ENCODE measurements at regions of chr11 and their contacts with region 1.

Region 1: GRCh38 chr11:72413914-72414628 is 20.3 kb downstream of the CLPB start:
- DNase-seq: no peak
- ATAC-seq: peak; percentile 83
- H3K4me3 ChIP-seq: no peak overlapping the region
- H3K27ac ChIP-seq: peak overlapping the region; percentile 53
- H3K4me1 ChIP-seq: peaks cover 23% of the 10 kb centered on the region
- H3K27me3 ChIP-seq: no peaks in the 10 kb centered on the region
- CTCF ChIP-seq: peak; percentile 92 to 98 (median 96); a peak in 5 of 6 replicates
- EP300 ChIP-seq: no peak
- POLR2A ChIP-seq: no peak
- RAD21 ChIP-seq: peak; percentile 81

Region 2: GRCh38 chr11:72189461-72190275 is 224.4 kb before region 1 on chr11:
- CTCF ChIA-PET with region 1: interaction called, 12 read pairs
- POLR2A ChIA-PET with region 1: no interaction called
- RAD21 ChIA-PET with region 1: no interaction called
- SMC1A ChIA-PET with region 1: interaction called, 3 read pairs
- in situ Hi-C with region 1: no loop called
- intact Hi-C with region 1: no loop called
- DNase-seq: no peak
- ATAC-seq: no peak
- H3K4me3 ChIP-seq: no peak overlapping the region
- H3K27ac ChIP-seq: no peak overlapping the region
- H3K4me1 ChIP-seq: no peaks in the 10 kb centered on the region
- H3K27me3 ChIP-seq: no peaks in the 10 kb centered on the region
- CTCF ChIP-seq: no peak
- EP300 ChIP-seq: no peak
- POLR2A ChIP-seq: no peak
- RAD21 ChIP-seq: no peak

Region 3: DNA sequence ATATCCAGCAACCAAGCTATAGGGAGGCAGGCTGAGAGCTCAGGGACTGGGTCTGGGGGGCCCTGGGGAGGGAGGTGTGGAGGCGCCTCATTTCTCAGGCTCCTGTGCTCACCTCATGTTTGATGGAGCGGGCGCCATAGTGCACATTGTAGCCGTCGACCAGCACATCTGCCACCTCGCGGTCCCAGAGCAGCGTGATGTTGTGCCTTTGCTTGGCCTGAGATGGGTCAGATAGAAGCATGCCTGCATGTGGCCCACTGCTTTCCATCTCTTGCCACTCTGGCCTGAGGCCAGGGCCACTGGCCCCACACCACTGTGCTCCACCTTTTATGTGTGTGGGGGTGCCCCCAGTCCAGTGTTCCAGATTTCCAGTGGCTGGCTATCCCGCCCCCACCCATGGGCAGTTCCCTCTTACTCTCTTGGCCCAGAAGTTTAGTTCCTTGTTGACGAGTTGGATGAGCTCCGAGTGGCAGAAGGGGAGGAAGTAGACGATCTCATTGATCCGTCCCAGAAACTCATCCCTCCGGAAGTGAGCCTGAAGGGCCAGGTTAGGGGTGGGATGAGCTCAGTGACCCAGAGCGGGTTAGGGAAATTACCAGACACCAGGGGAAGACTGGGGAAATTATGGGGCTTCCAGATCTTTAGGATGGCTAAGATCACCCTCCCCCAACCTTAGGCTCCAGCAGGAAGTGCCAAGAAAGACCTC is 120.0 kb before region 1 on chr11:
- CTCF ChIA-PET with region 1: interaction called, 41 read pairs
- POLR2A ChIA-PET with region 1: no interaction called
- RAD21 ChIA-PET with region 1: interaction called, 17 read pairs
- SMC1A ChIA-PET with region 1: interaction called, 22 read pairs
- in situ Hi-C with region 1: loop called (anchors 10 kb)
- intact Hi-C with region 1: loop called (anchors 1 kb)
- DNase-seq: no peak
- ATAC-seq: no peak
- H3K4me3 ChIP-seq: no peak overlapping the region
- H3K27ac ChIP-seq: no peak overlapping the region
- H3K4me1 ChIP-seq: no peaks in the 10 kb centered on the region
- H3K27me3 ChIP-seq: no peaks in the 10 kb centered on the region
- CTCF ChIP-seq: no peak
- EP300 ChIP-seq: no peak
- POLR2A ChIP-seq: no peak
- RAD21 ChIP-seq: no peak

Region 4: GRCh38 chr11:72333661-72334060 is 80.4 kb before region 1 on chr11:
- CTCF ChIA-PET with region 1: interaction called, 20 read pairs
- POLR2A ChIA-PET with region 1: no interaction called
- RAD21 ChIA-PET with region 1: no interaction called
- SMC1A ChIA-PET with region 1: interaction called, 4 read pairs
- in situ Hi-C with region 1: no loop called
- intact Hi-C with region 1: loop called (anchors 1 kb)
- DNase-seq: no peak
- ATAC-seq: peak; percentile 34
- H3K4me3 ChIP-seq: no peak overlapping the region
- H3K27ac ChIP-seq: no peak overlapping the region
- H3K4me1 ChIP-seq: no peaks in the 10 kb centered on the region
- H3K27me3 ChIP-seq: no peaks in the 10 kb centered on the region
- CTCF ChIP-seq: no peak
- EP300 ChIP-seq: no peak
- POLR2A ChIP-seq: no peak
- RAD21 ChIP-seq: no peak

Region 5: DNA sequence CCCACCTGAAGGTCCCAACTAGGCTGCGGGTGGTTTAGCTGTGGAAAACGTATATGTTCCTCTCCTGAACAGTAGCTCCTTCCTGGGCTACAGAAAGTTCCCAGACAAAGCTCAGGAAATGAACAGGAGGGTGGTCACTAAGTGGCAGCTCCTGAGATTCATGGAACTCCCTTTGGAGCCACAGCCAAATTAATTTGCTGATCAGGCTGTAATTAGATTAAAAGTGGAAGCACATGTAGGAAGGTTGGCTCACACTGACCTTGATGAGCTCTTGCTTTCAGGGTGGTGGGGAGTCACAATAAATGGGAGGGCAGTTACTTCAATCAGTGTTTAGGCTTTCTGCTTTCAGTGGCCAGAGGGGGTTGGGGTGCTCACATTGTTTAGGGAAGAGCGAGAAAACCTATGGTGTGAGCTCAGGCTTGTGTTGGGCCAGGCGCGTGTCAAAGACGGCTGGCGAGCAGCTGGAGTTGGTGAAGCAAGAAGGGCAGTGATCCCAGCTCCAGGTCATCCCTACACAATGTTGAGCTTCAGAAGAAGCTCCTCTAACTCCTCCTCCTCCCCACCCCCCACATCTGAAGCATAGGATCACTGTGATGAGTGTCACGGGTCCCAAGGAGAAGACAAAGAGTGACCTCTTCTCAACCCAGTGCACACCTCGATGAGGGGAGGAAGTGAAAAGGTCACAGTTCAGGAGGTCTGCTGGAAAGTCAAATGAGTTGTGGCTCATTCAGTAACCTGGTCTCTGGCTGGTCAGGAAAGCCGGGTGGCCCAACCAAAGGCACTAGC is 22.2 kb before region 1 on chr11:
- CTCF ChIA-PET with region 1: interaction called, 16 read pairs
- POLR2A ChIA-PET with region 1: no interaction called
- RAD21 ChIA-PET with region 1: interaction called, 5 read pairs
- SMC1A ChIA-PET with region 1: interaction called, 12 read pairs
- in situ Hi-C with region 1: no loop called
- intact Hi-C with region 1: no loop called
- DNase-seq: peak; percentile 37
- ATAC-seq: peak; percentile 84
- H3K4me3 ChIP-seq: peak overlapping the region; percentile 7; the same call in 1 of the 2 replicates
- H3K27ac ChIP-seq: peak overlapping the region; percentile 55
- H3K4me1 ChIP-seq: peaks cover 40% of the 10 kb centered on the region
- H3K27me3 ChIP-seq: no peaks in the 10 kb centered on the region
- CTCF ChIP-seq: no peak
- EP300 ChIP-seq: no peak
- POLR2A ChIP-seq: no peak; the same call in 1 of the 2 replicates
- RAD21 ChIP-seq: no peak

Measured in GM12878 (cell line).